Endothelial cell of umbilical vein (primary cell): ENCODE measurements at regions of chr11 and their contacts with region 1.

Region 1: DNA sequence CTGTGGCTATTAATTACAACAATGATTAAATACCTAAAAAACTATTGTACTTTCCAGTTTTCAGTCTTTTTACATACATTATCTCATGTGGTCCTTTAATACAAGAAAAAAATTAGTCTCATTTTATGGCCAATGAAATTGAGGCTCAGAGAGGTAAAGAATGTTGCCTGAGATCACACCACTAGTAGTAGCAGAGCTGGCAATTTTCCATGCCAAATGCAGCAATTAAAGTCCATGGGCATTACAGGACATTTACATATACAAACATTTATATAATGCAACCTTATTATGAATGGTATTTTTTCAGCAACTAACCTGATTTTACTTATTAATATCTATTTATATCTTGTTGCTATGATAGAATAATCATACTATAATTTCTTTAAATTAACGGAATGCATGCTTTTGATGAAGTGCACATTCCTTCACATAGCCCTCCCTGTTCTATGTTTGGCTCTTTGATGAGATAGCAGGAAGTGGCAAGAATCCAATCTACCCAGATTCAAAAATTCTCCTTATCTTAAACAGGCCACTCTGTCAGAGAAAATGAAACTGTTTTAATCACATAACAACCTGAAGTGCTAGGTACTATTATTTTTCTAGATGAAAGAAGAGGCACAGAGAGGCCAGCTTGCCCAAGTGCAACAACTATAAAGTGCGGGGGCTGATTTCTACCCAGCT is 120.9 kb upstream of the LDLRAD3 start:
- DNase-seq: no peak
- H3K4me3 ChIP-seq: no peak overlapping the region
- H3K27ac ChIP-seq: no peak overlapping the region
- H3K4me1 ChIP-seq: peaks cover 8% of the 10 kb centered on the region
- H3K27me3 ChIP-seq: no peaks in the 10 kb centered on the region
- CTCF ChIP-seq: no peak
- POLR2A ChIP-seq: no peak

Region 2: GRCh38 chr11:35617687-35618496 is 205.1 kb before region 1 on chr11 and contains the start of gene FJX1:
- CTCF ChIA-PET with region 1: interaction called, 152 read pairs
- POLR2A ChIA-PET with region 1: no interaction called
- dilution Hi-C with region 1: no loop called
- intact Hi-C with region 1: loop called (anchors 1 kb)
- DNase-seq: peak; percentile 83
- H3K4me3 ChIP-seq: peak within 1 kb of the TSS; percentile 54 to 75 (median 62)
- H3K27ac ChIP-seq: peak within 1 kb of the TSS; percentile 92
- H3K4me1 ChIP-seq: peaks cover 32% of the 10 kb centered on the region
- H3K27me3 ChIP-seq: peaks cover 3 to 18% of the 10 kb centered on the region in 2 experiments
- CTCF ChIP-seq: no peak
- POLR2A ChIP-seq: peak; percentile 32
- total RNA-seq, gene FJX1: 23.7 and 26.6 TPM in 2 replicates

Region 3: GRCh38 chr11:35765211-35765610 is 57.7 kb before region 1 on chr11:
- CTCF ChIA-PET with region 1: interaction called, 16 read pairs
- POLR2A ChIA-PET with region 1: no interaction called
- dilution Hi-C with region 1: no loop called
- intact Hi-C with region 1: no loop called
- DNase-seq: no peak
- H3K4me3 ChIP-seq: no peak overlapping the region
- H3K27ac ChIP-seq: no peak overlapping the region
- H3K4me1 ChIP-seq: peaks cover 6% of the 10 kb centered on the region
- H3K27me3 ChIP-seq: no peaks in the 10 kb centered on the region
- CTCF ChIP-seq: no peak
- POLR2A ChIP-seq: no peak

Region 4: DNA sequence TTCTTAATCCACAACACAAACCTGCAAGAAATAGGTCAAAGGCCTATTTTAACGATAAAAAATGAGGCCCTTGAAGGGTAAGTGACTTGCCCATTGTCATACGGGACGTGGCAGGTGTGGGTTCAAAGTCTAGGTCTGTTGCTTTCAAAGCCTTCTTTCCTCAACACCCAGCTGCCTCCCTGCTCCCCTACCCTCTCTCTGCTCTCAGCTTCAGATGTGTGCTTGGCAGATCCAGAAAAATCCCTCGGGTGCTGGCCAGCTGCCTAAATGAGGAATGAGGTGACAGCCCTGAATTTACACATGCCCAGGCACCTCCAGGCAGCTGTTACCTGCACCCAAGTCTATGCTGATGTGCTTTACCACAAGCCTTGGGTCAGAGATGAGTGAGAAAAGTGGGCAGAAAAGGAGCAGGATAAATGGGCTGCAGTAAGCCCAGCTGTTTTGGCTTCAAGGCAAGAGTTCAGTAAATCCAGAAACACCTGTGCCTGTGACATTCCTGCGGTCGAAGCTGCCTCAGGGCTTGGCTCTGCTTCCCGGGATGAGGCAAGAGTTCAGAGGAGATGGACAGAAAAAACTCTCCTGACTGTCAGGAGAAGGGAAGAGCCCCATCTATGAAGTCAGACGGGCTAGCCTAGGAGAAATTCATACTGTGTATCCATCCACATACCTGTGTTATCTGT is 71.0 kb after region 1 on chr11:
- CTCF ChIA-PET with region 1: interaction called, 19 read pairs
- POLR2A ChIA-PET with region 1: no interaction called
- dilution Hi-C with region 1: no loop called
- intact Hi-C with region 1: no loop called
- DNase-seq: no peak
- H3K4me3 ChIP-seq: no peak overlapping the region
- H3K27ac ChIP-seq: no peak overlapping the region
- H3K4me1 ChIP-seq: no peaks in the 10 kb centered on the region
- H3K27me3 ChIP-seq: peaks cover 0 to 15% of the 10 kb centered on the region in 2 experiments
- CTCF ChIP-seq: no peak
- POLR2A ChIP-seq: no peak

Region 5: GRCh38 chr11:36002196-36002595 is 179.2 kb after region 1 on chr11:
- CTCF ChIA-PET with region 1: interaction called, 41 read pairs
- POLR2A ChIA-PET with region 1: no interaction called
- dilution Hi-C with region 1: no loop called
- intact Hi-C with region 1: no loop called
- DNase-seq: peak; percentile 75
- H3K4me3 ChIP-seq: no peak overlapping the region
- H3K27ac ChIP-seq: peak overlapping the region; percentile 50
- H3K4me1 ChIP-seq: peaks cover 17% of the 10 kb centered on the region
- H3K27me3 ChIP-seq: no peaks in the 10 kb centered on the region
- CTCF ChIP-seq: no peak
- POLR2A ChIP-seq: no peak

Region 6: GRCh38 chr11:36088266-36088972 is 265.5 kb after region 1 on chr11:
- CTCF ChIA-PET with region 1: interaction called, 13 read pairs
- POLR2A ChIA-PET with region 1: no interaction called
- dilution Hi-C with region 1: no loop called
- intact Hi-C with region 1: no loop called
- DNase-seq: peak; percentile 36
- H3K4me3 ChIP-seq: no peak overlapping the region
- H3K27ac ChIP-seq: no peak overlapping the region
- H3K4me1 ChIP-seq: peaks cover 12% of the 10 kb centered on the region
- H3K27me3 ChIP-seq: no peaks in the 10 kb centered on the region
- CTCF ChIP-seq: no peak
- POLR2A ChIP-seq: no peak

Region 7: GRCh38 chr11:36265793-36266628 is 443.1 kb after region 1 on chr11:
- CTCF ChIA-PET with region 1: interaction called, 266 read pairs
- POLR2A ChIA-PET with region 1: interaction called, 4 read pairs
- dilution Hi-C with region 1: loop called (anchors 25 kb)
- intact Hi-C with region 1: loop called (anchors 1 kb)
- DNase-seq: peak; percentile 40
- H3K4me3 ChIP-seq: no peak overlapping the region
- H3K27ac ChIP-seq: no peak overlapping the region
- H3K4me1 ChIP-seq: no peaks in the 10 kb centered on the region
- H3K27me3 ChIP-seq: peaks cover 0 to 5% of the 10 kb centered on the region in 2 experiments
- CTCF ChIP-seq: peak; percentile 86 to 89
- POLR2A ChIP-seq: no peak